PC-9 (cell line): ENCODE measurements at regions of chr2 and their contacts with region 1.

Region 1: GRCh38 chr2:223328578-223328977 is 273.6 kb downstream of the SCG2 start:
- DNase-seq: no peak
- H3K4me3 ChIP-seq: no peak overlapping the region
- H3K27ac ChIP-seq: no peak overlapping the region
- H3K4me1 ChIP-seq: no peaks in the 10 kb centered on the region
- H3K27me3 ChIP-seq: peaks cover 4% of the 10 kb centered on the region; the same call in 1 of the 2 replicates
- CTCF ChIP-seq: no peak

Region 2: DNA sequence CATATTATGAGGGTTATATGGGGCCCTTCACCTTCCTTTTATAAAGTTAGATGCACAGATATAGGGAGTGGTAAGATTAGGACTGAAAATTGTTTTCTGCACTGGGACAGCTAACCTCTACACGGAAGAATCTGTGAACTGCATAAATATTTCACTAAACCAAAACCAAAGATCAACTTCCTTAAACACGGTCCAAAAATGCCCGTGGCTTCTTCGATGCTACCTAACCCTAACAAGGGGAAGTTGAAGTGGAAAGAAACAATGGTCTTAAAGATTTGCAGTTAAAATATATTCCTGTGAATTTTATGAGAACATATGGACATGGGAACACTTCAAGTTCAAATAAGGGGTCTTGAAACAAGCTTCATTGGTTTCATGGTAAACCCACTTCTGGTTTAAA is 996.5 kb before region 1 on chr2:
- CTCF ChIA-PET with region 1: no interaction called
- POLR2A ChIA-PET with region 1: no interaction called
- intact Hi-C with region 1: no loop called
- DNase-seq: no peak
- H3K4me3 ChIP-seq: no peak overlapping the region
- H3K27ac ChIP-seq: no peak overlapping the region
- H3K4me1 ChIP-seq: no peaks in the 10 kb centered on the region
- H3K27me3 ChIP-seq: no peaks in the 10 kb centered on the region
- CTCF ChIP-seq: no peak

Region 3: GRCh38 chr2:222451224-222451674 is 877.3 kb before region 1 on chr2:
- CTCF ChIA-PET with region 1: no interaction called
- POLR2A ChIA-PET with region 1: no interaction called
- intact Hi-C with region 1: no loop called
- DNase-seq: no peak
- H3K4me3 ChIP-seq: no peak overlapping the region
- H3K27ac ChIP-seq: no peak overlapping the region
- H3K4me1 ChIP-seq: no peaks in the 10 kb centered on the region
- H3K27me3 ChIP-seq: no peaks in the 10 kb centered on the region
- CTCF ChIP-seq: no peak

Region 4: DNA sequence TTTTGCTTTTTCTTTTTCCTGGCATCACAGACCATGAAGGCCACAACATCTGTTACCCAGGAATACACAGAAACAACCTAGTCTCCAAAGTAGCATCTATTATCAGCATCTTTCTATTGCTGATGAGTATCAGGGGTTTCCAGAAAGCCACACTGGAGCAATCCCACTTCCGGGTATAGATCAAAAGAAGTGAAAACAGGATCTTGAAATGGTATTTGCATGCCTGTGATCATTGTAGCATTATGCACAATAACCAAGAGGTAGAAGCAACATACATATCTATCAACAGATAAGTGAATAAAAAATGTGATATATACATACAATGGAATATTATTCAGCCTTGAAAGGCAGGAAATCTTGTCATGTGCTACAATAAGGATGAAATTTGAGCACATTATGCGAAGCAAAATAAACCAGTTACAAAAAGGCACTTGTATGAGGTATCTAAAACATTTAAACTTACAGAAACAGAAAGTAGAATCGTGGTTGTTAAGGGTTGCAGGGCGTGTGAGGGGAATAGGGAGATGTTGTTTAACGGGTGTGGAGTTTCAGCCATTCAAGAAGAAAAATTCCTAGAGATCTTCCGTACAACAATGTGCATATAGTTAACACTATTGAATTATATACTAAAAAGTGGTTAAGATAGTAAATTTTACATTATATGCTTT is 161.5 kb before region 1 on chr2:
- CTCF ChIA-PET with region 1: no interaction called
- POLR2A ChIA-PET with region 1: no interaction called
- intact Hi-C with region 1: no loop called
- DNase-seq: no peak
- H3K4me3 ChIP-seq: no peak overlapping the region
- H3K27ac ChIP-seq: no peak overlapping the region
- H3K4me1 ChIP-seq: no peaks in the 10 kb centered on the region
- H3K27me3 ChIP-seq: no peaks in the 10 kb centered on the region
- CTCF ChIP-seq: no peak

Region 5: DNA sequence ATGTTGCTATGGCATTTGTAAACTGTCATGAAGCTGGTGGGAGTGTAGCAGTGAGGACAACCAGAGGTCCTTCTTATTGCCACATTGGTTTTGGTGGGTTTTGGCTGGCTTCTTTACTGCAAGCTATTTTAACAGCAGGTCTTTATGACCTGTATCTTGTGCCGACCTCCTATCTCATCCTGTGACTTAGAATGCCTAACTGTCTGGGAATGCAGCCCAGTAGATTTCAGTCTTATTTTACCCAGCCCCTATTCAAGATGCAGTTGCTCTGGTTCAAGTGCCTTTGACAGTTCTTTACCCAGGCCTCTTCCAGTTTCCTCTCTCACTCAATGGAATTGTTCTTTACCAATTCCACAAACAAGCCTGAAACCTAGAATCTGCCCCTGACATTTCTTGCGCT is 131.5 kb before region 1 on chr2:
- CTCF ChIA-PET with region 1: no interaction called
- POLR2A ChIA-PET with region 1: no interaction called
- intact Hi-C with region 1: no loop called
- DNase-seq: no peak
- H3K4me3 ChIP-seq: no peak overlapping the region
- H3K27ac ChIP-seq: no peak overlapping the region
- H3K4me1 ChIP-seq: no peaks in the 10 kb centered on the region
- H3K27me3 ChIP-seq: no peaks in the 10 kb centered on the region
- CTCF ChIP-seq: no peak

Region 6: GRCh38 chr2:223641097-223641496 is 312.5 kb after region 1 on chr2:
- CTCF ChIA-PET with region 1: no interaction called
- POLR2A ChIA-PET with region 1: interaction called, 10 read pairs
- intact Hi-C with region 1: no loop called
- DNase-seq: peak; percentile 65 to 67
- H3K4me3 ChIP-seq: no peak overlapping the region
- H3K27ac ChIP-seq: no peak overlapping the region
- H3K4me1 ChIP-seq: 0 out of 2 replicates have a peak, but pooled peaks cover 5% of the 10 kb centered on the region
- H3K27me3 ChIP-seq: no peaks in the 10 kb centered on the region
- CTCF ChIP-seq: no peak